H1 (cell line): ENCODE measurements at regions of chr1 and their contacts with region 1.

Region 1: DNA sequence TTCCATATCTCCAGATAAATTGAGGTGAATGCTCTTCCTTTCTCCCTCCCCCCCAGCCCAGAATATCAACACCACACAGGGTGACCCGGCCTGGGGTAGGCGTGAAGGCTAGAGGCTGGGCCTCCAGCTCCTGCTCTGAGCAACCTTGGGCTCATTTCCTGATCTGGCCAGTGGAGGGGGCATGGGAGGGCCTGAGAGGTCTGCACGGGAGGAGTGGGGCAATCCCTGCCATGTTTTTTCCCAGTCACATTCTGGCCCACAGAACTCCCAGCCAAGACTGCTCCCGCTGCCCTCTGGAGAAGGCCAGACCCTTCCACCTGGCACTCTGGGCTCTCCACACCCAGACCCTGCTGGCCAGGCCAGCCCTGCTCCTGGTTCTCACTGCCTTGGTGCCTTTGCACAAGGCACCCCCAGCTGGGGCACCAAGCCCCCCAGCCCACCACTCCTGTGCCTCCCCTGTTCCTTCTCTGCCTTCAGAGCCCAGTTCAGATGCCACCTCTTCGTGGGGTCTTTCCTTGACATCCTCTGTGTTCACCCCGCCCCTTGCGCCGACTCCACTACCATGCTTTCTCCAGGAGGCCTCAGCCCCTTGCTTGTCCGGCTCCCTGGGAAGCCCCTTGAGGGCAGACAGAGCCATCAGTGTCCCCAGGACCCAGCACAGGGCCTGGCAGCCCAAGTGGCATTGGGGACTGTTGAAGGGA is 3.7 kb downstream of the CLDN19 start:
- DNase-seq: no peak
- H3K4me3 ChIP-seq: no peak overlapping the region
- H3K27ac ChIP-seq: no peak overlapping the region
- H3K4me1 ChIP-seq: peaks cover 0 to 31% (median 22%) of the 10 kb centered on the region in 4 experiments; a peak in 6 of 7 replicates
- H3K27me3 ChIP-seq: no peaks in the 10 kb centered on the region
- CTCF ChIP-seq: peak in 2 of 3 experiments; percentile 50 to 57; a peak in 3 of 4 replicates
- EP300 ChIP-seq: no peak
- POLR2A ChIP-seq: no peak
- RAD21 ChIP-seq: peak; percentile 19 to 49; a peak in 2 of 4 replicates

Region 2: DNA sequence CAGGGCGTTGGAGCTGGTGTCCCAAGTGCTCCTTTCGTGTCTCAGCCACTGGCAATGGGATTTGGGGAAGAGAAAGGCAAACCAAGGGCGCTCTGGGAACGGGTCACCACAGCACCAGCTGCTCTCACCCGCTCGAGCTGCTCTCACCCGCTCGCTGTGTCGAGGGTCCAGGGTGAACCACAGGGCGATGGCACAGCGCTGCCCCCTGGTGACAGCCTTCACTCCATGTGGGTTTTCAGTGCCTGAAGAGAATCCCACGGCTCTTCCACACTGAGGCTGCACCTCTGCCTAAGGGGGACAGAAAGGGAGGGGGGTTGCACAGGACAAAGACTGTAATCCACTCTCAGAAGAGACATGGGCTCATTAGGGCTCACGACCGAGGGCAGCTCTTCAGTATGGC is 10.8 kb after region 1 on chr1:
- CTCF ChIA-PET with region 1: interaction called, 62 read pairs
- POLR2A ChIA-PET with region 1: interaction called, 5 read pairs
- DNase-seq: peak in 1 of 2 experiments; percentile 86
- H3K4me3 ChIP-seq: no peak overlapping the region
- H3K27ac ChIP-seq: no peak overlapping the region
- H3K4me1 ChIP-seq: peaks cover 0 to 2% (median 0%) of the 10 kb centered on the region in 4 experiments; a peak in 1 of 7 replicates
- H3K27me3 ChIP-seq: no peaks in the 10 kb centered on the region
- CTCF ChIP-seq: peak; percentile 81 to 88 (median 86)
- EP300 ChIP-seq: no peak
- POLR2A ChIP-seq: no peak
- RAD21 ChIP-seq: peak; percentile 88 to 91

Region 3: GRCh38 chr1:42756956-42757891 is 20.9 kb after region 1 on chr1:
- CTCF ChIA-PET with region 1: interaction called, 77 read pairs
- POLR2A ChIA-PET with region 1: no interaction called
- DNase-seq: no peak
- H3K4me3 ChIP-seq: no peak overlapping the region
- H3K27ac ChIP-seq: no peak overlapping the region
- H3K4me1 ChIP-seq: no peaks in the 10 kb centered on the region
- H3K27me3 ChIP-seq: no peaks in the 10 kb centered on the region
- CTCF ChIP-seq: peak; percentile 34 to 75 (median 57)
- EP300 ChIP-seq: no peak
- POLR2A ChIP-seq: no peak
- RAD21 ChIP-seq: peak; percentile 51 to 61